Colonic mucosa (tissue), 4 donors: ENCODE measurements at regions of chr10 and their contacts with region 1.

Region 1: DNA sequence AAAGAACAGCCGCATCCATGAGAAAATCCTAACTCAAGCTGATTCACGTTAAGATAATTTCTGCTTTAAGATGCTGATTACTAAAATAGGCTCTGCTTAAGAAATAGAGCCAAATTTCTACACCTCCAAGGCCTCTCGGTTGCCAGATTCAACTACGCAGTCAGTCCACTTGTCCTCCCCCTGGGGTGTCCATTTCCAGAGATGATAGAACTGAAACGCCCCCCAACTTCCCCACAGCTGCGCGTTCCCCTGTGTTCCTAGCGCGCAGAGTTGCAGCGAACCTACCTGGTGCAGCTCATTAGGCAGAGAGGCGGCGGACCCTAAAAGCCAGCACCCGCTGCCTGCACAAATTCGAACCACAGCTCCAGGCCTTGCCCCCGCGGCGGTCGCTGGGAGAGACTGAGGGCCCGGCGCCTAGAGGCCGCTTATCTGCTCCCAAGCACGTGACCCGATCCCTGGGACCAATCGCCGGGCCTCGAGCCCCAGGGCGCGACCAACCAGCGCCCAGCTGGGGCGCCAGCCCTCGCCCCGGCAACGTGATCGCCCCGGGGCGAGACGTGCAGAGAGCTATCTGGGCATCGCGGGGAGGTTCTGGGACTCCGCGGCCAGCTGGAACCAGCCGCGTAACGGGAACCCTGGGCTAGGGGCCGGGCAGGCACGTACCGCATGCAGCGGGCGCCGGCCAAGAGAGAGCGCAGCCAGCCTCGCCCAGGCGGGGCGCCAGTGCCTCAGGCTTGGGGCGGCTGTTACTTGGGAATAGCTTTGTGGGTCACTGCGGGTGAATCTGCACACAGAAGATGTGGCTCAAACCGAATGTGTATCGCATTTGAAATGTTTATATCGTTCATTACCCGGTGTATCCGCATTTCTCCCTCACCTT is at the start of gene PPP1R3C:
- DNase-seq: peak; percentile 83
- H3K4me3 ChIP-seq: peak within 1 kb of the TSS; percentile 41
- H3K27ac ChIP-seq: peak within 1 kb of the TSS; percentile 39
- H3K4me1 ChIP-seq: no peaks in the 10 kb centered on the region
- H3K27me3 ChIP-seq: no peaks in the 10 kb centered on the region
- CTCF ChIP-seq: no peak
- total RNA-seq, gene PPP1R3C: 1.9 to 6.5 TPM

Region 2: GRCh38 chr10:91298224-91298871 is 334.6 kb before region 1 on chr10:
- intact Hi-C with region 1: loop called (anchors 10 kb)
- DNase-seq: peak; percentile 76
- H3K4me3 ChIP-seq: peak overlapping the region; percentile 12
- H3K27ac ChIP-seq: no peak overlapping the region
- H3K4me1 ChIP-seq: no peaks in the 10 kb centered on the region
- H3K27me3 ChIP-seq: no peaks in the 10 kb centered on the region
- CTCF ChIP-seq: peak; percentile 94

Region 3: GRCh38 chr10:91389636-91390512 is 243.0 kb before region 1 on chr10:
- intact Hi-C with region 1: loop called (anchors 5 kb)
- DNase-seq: peak; percentile 21
- H3K4me3 ChIP-seq: no peak overlapping the region
- H3K27ac ChIP-seq: no peak overlapping the region
- H3K4me1 ChIP-seq: peaks cover 3% of the 10 kb centered on the region
- H3K27me3 ChIP-seq: no peaks in the 10 kb centered on the region
- CTCF ChIP-seq: peak; percentile 62

Region 4: GRCh38 chr10:91493313-91493712 is 139.6 kb before region 1 on chr10:
- intact Hi-C with region 1: loop called (anchors 2 kb)
- DNase-seq: no peak
- H3K4me3 ChIP-seq: no peak overlapping the region
- H3K27ac ChIP-seq: no peak overlapping the region
- H3K4me1 ChIP-seq: no peaks in the 10 kb centered on the region
- H3K27me3 ChIP-seq: no peaks in the 10 kb centered on the region
- CTCF ChIP-seq: peak; percentile 33

Region 5: DNA sequence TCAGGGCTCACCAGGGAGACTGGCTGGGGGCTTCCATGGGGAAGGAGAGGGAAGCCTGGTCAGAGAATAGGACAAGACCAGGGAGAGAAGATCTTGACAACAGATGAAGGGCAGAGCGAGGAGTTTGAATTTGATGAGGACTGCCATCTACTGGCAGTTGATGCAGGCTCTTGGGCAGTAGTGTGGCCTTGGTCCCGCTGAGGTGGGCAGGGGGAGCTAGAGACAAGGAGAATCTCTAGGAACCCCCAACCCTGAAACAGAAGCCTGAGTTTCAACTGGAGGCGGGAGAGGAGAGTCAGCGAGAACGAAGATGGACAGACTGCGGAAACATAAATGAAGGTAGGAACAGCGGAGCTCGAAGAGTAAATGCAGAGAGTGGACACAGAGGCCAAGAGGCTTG is 81.1 kb before region 1 on chr10:
- intact Hi-C with region 1: loop called (anchors 5 kb)
- DNase-seq: peak; percentile 46
- H3K4me3 ChIP-seq: no peak overlapping the region
- H3K27ac ChIP-seq: no peak overlapping the region
- H3K4me1 ChIP-seq: no peaks in the 10 kb centered on the region
- H3K27me3 ChIP-seq: no peaks in the 10 kb centered on the region
- CTCF ChIP-seq: no peak

Region 6: DNA sequence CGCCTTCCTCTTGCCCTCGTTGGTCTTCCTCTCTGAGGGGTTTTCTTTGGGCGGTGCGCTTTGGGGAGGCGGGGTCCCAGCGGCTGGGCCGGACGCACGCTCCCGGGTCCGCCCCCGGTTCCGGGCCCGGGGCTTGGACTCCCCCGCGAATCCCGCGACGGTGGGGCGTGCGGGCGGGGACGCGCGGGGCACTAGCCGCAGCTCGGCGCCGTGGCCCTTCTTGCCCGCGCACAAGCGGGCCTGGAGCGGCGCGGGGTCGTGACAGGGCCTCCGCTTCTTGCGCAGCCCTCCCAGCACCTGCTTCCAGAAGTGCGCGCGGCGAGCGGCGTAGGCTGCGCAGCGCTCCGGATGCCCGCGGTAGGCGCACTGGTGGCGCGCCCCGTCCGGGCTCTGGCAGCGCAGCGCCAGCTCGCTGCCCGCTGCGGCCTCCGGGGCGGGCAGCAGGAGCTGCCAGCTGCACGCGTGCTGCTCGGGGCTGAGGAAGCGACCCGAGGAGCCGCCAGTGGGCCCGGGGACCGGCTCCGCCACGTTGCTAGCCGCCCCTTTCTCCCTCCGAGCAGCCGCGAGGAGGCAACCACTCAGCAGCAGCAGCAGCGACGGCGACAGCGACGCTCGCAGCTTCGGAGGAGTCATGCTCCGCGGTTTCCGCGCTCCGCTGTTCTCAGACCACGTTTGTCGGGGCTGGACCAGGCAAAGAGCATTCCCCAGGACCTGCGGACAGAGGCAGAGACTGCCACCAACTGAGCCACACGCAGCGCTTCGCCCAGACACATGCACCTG is 275.6 kb after region 1 on chr10:
- intact Hi-C with region 1: loop called (anchors 10 kb)
- DNase-seq: peak; percentile 77
- H3K4me3 ChIP-seq: peak overlapping the region; percentile 94
- H3K27ac ChIP-seq: peak overlapping the region; percentile 61
- H3K4me1 ChIP-seq: no peaks in the 10 kb centered on the region
- H3K27me3 ChIP-seq: no peaks in the 10 kb centered on the region
- CTCF ChIP-seq: peak; percentile 38